Psoas muscle (tissue), 8 donors: ENCODE measurements at regions of chr19 and their contacts with region 1.

Region 1: GRCh38 chr19:51097166-51097738 is 11.0 kb downstream of the CTU1 start:
- DNase-seq: peak; percentile 47 to 74
- ATAC-seq: peak; percentile 41 to 63 (median 54)
- H3K4me3 ChIP-seq: no peak overlapping the region
- H3K27ac ChIP-seq: no peak overlapping the region
- H3K4me1 ChIP-seq: peaks cover 4% of the 10 kb centered on the region
- H3K27me3 ChIP-seq: no peaks in the 10 kb centered on the region
- CTCF ChIP-seq: peak; percentile 50

Region 2: GRCh38 chr19:51020988-51021651 is 76.1 kb before region 1 on chr19:
- intact Hi-C with region 1: loop called in 1 of 2 experiments (anchors 5 kb)
- DNase-seq: peak in 1 of 2 donors; percentile 0
- ATAC-seq: no peak
- H3K4me3 ChIP-seq: no peak overlapping the region
- H3K27ac ChIP-seq: no peak overlapping the region
- H3K4me1 ChIP-seq: no peaks in the 10 kb centered on the region
- H3K27me3 ChIP-seq: peaks cover 0 to 46% (median 9%) of the 10 kb centered on the region in 3 donors
- CTCF ChIP-seq: peak; percentile 42

Region 3: GRCh38 chr19:51531349-51532315 is 434.4 kb after region 1 on chr19 and contains the start of gene SIGLEC6:
- intact Hi-C with region 1: no loop called
- DNase-seq: peak; percentile 41 to 67
- ATAC-seq: peak in 1 of 4 donors; percentile 40
- H3K4me3 ChIP-seq: no peak within 1 kb of the TSS
- H3K27ac ChIP-seq: no peak within 1 kb of the TSS
- H3K4me1 ChIP-seq: no peaks in the 10 kb centered on the region
- H3K27me3 ChIP-seq: peaks cover 0 to 2% (median 0%) of the 10 kb centered on the region in 3 donors
- CTCF ChIP-seq: no peak
- total RNA-seq, gene SIGLEC6: 0.20 to 0.40 (median 0.27) TPM